Activated T-helper 1 cell treated with anti-CD3 and anti-CD28 coated beads, Interleukin-12 subunit alpha, Interleukin-12 subunit beta, Interleukin-2, Interleukin-4 antibody, amounts not matched to agents 30 ng/mL and 10 ng/mL and 1 ng/mL, durations not matched to agents 14 hours and 24 hours and 36 hours (primary cell): ENCODE measurements at regions of chr2 and their contacts with region 1.

Region 1: GRCh38 chr2:173354601-173355131 is at the start of gene CDCA7:
- DNase-seq: peak; percentile 77
- H3K4me3 Mint-ChIP-seq: peak within 1 kb of the TSS; percentile 93
- H3K27ac Mint-ChIP-seq: peak within 1 kb of the TSS; percentile 97
- H3K4me1 Mint-ChIP-seq: peaks cover 54% of the 10 kb centered on the region
- H3K27me3 Mint-ChIP-seq: peaks cover 2% of the 10 kb centered on the region
- total RNA-seq, gene CDCA7: 112 and 115 TPM in 2 replicates

Region 2: DNA sequence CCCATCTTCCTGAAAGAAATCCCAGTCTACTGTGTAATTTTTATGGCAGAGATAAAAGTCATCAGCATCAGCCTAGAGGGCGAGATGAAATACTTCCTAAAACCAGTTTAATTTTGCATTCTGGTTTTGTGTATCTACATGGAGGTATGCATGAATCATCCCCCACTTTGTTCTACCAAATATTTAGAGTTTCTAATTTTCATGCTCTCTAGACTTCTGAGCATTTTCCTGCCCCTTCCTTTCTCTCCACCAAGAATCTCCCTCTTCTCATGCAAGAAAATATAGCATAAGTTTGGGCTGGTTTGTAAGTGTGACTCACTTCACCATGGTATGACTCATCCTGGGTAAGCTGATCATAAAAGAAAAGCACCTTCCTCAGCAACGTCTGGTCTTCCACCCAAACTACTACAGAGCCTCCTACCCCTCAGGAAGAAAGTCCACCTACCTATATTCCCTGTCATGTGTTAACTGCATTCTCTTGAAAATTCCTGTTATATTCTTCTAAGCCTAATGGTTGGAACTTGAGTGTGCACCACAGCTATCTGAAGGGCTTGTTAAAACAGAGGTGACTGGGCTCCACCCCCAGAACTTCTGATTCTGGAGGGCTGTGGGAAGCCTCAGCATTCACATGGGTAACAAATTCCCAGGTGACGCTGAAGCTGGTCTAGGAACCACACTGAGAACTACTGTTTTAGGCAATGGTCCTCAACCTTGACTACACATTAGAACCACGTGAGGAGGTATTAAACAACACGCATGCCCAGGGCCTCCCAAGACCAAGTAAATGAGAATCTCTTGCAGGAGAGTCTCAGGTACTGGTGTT is 656.4 kb before region 1 on chr2:
- intact Hi-C with region 1: no loop called
- DNase-seq: no peak
- H3K4me3 Mint-ChIP-seq: no peak overlapping the region
- H3K27ac Mint-ChIP-seq: peak overlapping the region; percentile 27
- H3K4me1 Mint-ChIP-seq: peaks cover 25% of the 10 kb centered on the region
- H3K27me3 Mint-ChIP-seq: peaks cover 3% of the 10 kb centered on the region

Region 3: DNA sequence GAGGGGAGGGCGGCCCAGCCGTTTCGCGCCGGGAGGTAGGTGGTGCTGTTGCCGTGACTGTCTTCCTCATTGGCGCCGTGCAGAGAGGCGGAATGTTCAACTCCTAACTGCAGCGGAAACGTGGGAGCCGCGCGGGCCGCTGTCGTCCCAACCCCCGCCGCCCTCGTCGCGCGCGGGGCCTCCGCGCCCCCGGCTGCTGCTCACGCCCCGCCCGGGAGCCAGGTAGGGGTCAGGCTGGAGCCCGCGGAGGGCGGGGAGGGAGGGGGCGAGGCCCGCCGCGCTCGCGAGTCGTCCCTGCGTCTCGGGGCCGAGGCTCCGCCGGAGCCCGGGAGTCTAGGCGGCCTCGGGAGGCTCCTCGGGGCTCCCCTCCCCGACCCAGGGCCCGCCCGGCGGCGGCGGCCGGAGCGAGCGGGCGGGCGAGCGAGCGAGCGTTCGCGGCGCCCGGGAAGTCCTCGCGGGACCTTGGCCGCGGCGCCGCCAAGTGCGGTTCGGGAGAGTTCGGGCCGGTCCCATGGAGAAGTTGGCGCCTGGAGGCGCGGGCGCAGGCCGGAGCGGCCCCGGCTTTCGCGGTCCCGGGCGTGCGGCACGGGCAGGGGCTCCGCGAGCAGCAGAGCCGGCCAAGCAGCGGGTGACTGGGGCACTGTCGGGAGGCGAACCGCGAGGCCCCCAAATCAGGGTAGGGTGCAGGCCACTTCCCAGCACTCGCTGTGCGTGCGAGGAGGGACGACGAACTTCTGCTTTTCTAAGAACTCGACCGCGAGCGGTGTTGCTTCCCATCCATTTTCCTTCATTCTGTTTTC is 278.7 kb before region 1 on chr2 and contains the start of gene MAP3K20:
- intact Hi-C with region 1: loop called (anchors 1 kb)
- DNase-seq: peak; percentile 60
- H3K4me3 Mint-ChIP-seq: peak within 1 kb of the TSS; percentile 86
- H3K27ac Mint-ChIP-seq: peak within 1 kb of the TSS; percentile 77
- H3K4me1 Mint-ChIP-seq: peaks cover 29% of the 10 kb centered on the region
- H3K27me3 Mint-ChIP-seq: peaks cover 19% of the 10 kb centered on the region
- total RNA-seq, gene MAP3K20: 17.7 and 21.8 TPM in 2 replicates

Region 4: GRCh38 chr2:173210270-173211196 is 144.1 kb before region 1 on chr2:
- intact Hi-C with region 1: loop called (anchors 2 kb)
- DNase-seq: peak; percentile 41
- H3K4me3 Mint-ChIP-seq: no peak overlapping the region
- H3K27ac Mint-ChIP-seq: no peak overlapping the region
- H3K4me1 Mint-ChIP-seq: peaks cover 6% of the 10 kb centered on the region
- H3K27me3 Mint-ChIP-seq: no peaks in the 10 kb centered on the region

Region 5: GRCh38 chr2:173286153-173286809 is 68.4 kb before region 1 on chr2:
- intact Hi-C with region 1: loop called (anchors 2 kb)
- DNase-seq: no peak
- H3K4me3 Mint-ChIP-seq: no peak overlapping the region
- H3K27ac Mint-ChIP-seq: peak overlapping the region; percentile 40
- H3K4me1 Mint-ChIP-seq: peaks cover 5% of the 10 kb centered on the region
- H3K27me3 Mint-ChIP-seq: no peaks in the 10 kb centered on the region

Region 6: GRCh38 chr2:174248187-174248997 is 893.7 kb after region 1 on chr2 and contains the start of gene OLA1:
- intact Hi-C with region 1: loop called (anchors 2 kb)
- DNase-seq: peak; percentile 95
- H3K4me3 Mint-ChIP-seq: peak within 1 kb of the TSS; percentile 83
- H3K27ac Mint-ChIP-seq: peak within 1 kb of the TSS; percentile 79
- H3K4me1 Mint-ChIP-seq: peaks cover 26% of the 10 kb centered on the region
- H3K27me3 Mint-ChIP-seq: no peaks in the 10 kb centered on the region
- total RNA-seq, gene OLA1: 132 and 139 TPM in 2 replicates